Activated CD8-positive, alpha-beta T cell treated with anti-CD3 and anti-CD28 coated beads, Interleukin-2, amount 10 ng/mL, durations not matched to agents 7 days and 5 days (primary cell): ENCODE measurements at regions of chr12 and their contacts with region 1.

Region 1: GRCh38 chr12:52879394-52880351 is 25.2 kb downstream of the KRT8 start:
- DNase-seq: peak; percentile 84
- ATAC-seq: peak; percentile 97
- H3K4me3 Mint-ChIP-seq: peak overlapping the region; percentile 49
- H3K27ac Mint-ChIP-seq: no peak overlapping the region
- H3K4me1 Mint-ChIP-seq: peaks cover 13% of the 10 kb centered on the region
- H3K27me3 Mint-ChIP-seq: peaks cover 11% of the 10 kb centered on the region

Region 2: DNA sequence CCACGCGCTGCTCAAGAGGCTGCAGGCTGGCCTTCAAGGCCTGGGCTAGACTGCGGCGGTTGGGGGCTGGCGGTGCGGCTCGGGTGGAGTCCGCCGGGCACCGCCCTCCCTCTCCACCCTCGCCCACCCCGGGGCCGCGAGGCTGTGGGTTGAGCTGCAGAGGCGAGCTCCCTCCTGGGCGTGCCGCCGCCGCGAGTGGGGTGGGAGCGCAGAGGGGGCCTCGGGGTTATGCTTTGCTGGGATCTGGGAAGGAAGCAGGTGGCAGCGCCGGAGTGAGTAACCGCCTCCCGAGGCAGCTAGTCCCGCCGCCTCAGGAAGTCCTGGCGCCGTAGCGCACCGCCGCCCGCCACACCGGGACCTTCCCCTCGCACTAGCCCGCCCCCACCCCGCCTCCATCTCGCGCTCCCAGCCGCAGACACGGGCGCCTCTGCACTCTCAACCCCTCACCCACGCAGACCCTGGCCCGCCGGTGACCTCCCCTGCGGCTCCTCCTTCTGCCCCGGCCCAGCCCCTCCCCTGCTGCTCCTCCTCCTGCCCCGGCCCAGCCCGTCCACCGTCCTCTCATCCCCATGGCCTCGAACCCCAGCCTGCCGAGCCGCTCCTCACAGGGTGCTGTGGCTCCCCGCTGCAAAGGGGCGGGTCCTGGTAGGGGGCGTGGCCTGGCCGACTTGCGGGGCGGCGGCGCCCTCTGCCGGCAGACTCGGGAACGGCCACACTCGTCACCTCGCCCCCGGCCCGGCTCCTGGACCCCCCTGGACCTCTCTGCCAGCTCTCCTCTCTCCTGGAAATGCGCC is 856.3 kb before region 1 on chr12:
- CTCF ChIA-PET with region 1: no interaction called
- POLR2A ChIA-PET with region 1: no interaction called
- DNase-seq: peak; percentile 95
- ATAC-seq: peak; percentile 61
- H3K4me3 Mint-ChIP-seq: peak overlapping the region; percentile 94
- H3K27ac Mint-ChIP-seq: peak overlapping the region; percentile 99
- H3K4me1 Mint-ChIP-seq: peaks cover 59% of the 10 kb centered on the region
- H3K27me3 Mint-ChIP-seq: peaks cover 2% of the 10 kb centered on the region

Region 3: DNA sequence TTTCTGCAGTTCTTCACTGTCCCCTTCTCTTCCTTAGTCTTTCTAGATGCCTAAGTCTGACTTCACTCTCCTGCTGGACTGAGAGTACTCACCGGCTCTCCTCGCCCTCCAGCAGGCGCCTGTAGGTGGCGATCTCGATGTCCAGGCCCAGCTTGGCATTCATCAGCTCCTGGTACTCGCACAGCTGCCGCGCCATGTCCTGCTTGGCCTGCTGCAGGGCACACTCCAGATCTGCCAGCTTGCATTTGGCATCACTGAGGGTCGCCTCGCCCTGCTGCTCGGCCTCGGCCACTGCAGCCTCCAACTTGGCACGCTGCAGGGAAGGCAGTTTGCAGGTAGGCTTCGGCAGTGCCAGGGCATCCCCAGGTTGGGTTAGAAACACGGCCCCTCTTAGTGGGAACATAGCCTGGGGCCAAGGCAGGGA is 499.4 kb before region 1 on chr12:
- CTCF ChIA-PET with region 1: interaction called, 18 read pairs
- POLR2A ChIA-PET with region 1: interaction called, 3 read pairs
- DNase-seq: peak; percentile 36
- ATAC-seq: no peak
- H3K4me3 Mint-ChIP-seq: no peak overlapping the region
- H3K27ac Mint-ChIP-seq: no peak overlapping the region
- H3K4me1 Mint-ChIP-seq: peaks cover 28% of the 10 kb centered on the region
- H3K27me3 Mint-ChIP-seq: peaks cover 15% of the 10 kb centered on the region

Region 4: DNA sequence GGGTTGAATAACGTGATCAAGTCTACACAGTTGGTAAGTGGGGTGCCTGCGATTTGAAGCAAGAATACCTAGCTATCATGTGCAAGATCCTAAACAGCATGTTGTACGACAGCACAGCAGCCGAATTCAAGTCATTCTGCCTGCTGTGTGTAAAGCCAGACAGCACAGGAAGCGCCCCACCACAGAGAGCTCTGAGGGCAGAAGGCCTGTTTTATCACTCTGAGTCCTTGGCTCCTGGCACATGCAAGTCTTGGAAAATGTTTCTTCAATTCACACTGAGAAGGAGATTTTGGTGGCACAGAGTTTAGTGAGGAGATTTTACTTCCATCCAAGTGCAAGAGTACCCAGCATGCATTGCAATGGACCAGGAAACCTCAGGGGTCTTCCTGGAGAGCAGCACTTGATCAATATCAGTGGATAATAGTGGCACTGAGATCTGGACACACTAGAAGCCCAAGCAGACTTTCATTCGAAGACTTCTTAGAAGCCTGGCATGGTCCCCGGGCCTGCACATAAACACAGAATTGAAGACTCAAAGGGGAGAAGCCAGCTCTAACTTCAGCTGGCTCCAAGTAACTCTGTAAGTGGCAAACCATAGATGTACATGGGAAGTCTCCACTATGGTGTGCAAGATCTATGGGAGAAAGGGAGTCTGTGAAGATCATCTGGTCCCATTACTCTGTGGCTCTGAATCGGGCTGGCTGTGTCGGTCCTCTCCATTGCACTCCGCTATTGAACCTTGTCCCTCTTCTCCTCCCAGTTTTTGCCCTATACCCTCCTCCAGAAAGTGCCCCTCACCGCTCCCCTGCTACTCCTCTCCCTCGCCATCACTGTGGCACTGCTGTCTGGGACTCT is 197.9 kb before region 1 on chr12:
- CTCF ChIA-PET with region 1: interaction called, 10 read pairs
- POLR2A ChIA-PET with region 1: no interaction called
- DNase-seq: peak; percentile 71
- ATAC-seq: peak; percentile 94
- H3K4me3 Mint-ChIP-seq: no peak overlapping the region
- H3K27ac Mint-ChIP-seq: no peak overlapping the region
- H3K4me1 Mint-ChIP-seq: peaks cover 25% of the 10 kb centered on the region
- H3K27me3 Mint-ChIP-seq: peaks cover 36% of the 10 kb centered on the region

Region 5: DNA sequence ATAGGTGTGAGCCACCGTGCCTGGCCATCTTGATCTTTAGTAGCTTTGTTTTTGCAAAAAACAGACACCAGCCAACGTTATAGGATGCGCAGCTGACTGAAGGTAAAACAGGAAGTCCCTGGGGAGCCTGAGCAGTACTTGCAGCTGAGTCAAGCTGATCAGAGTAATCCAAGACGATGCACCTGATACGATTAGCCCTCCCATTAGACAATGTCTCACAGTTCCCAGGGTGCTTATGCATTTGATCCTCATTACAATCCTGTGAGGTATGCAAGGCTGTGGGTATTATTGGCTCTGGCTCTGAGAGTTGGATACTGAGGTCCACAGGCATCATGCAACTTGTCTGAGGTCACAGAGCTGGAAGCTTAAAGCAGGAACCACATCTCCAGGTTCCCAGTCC is 77.3 kb after region 1 on chr12:
- CTCF ChIA-PET with region 1: interaction called, 26 read pairs
- POLR2A ChIA-PET with region 1: no interaction called
- DNase-seq: no peak
- ATAC-seq: no peak
- H3K4me3 Mint-ChIP-seq: no peak overlapping the region
- H3K27ac Mint-ChIP-seq: no peak overlapping the region
- H3K4me1 Mint-ChIP-seq: peaks cover 3% of the 10 kb centered on the region
- H3K27me3 Mint-ChIP-seq: peaks cover 2% of the 10 kb centered on the region

Region 6: GRCh38 chr12:53295070-53295890 is 415.6 kb after region 1 on chr12 and contains the start of gene PFDN5:
- CTCF ChIA-PET with region 1: no interaction called
- POLR2A ChIA-PET with region 1: no interaction called
- DNase-seq: peak; percentile 93
- ATAC-seq: peak; percentile 88
- H3K4me3 Mint-ChIP-seq: peak within 1 kb of the TSS; percentile 97
- H3K27ac Mint-ChIP-seq: peak within 1 kb of the TSS; percentile 92
- H3K4me1 Mint-ChIP-seq: peaks cover 40% of the 10 kb centered on the region
- H3K27me3 Mint-ChIP-seq: no peaks in the 10 kb centered on the region
- total RNA-seq, gene PFDN5: 292 to 307 TPM